Psoas muscle (tissue), 8 donors: ENCODE measurements at regions of chr12 and their contacts with region 1.

Region 1: GRCh38 chr12:54032627-54033100 is at the start of gene HOXC5:
- DNase-seq: peak; percentile 76 to 82
- ATAC-seq: peak; percentile 51 to 66 (median 59)
- H3K4me3 ChIP-seq: peak within 1 kb of the TSS; percentile 62
- H3K27ac ChIP-seq: peak within 1 kb of the TSS; percentile 24
- H3K4me1 ChIP-seq: peaks cover 13% of the 10 kb centered on the region
- H3K27me3 ChIP-seq: peaks cover 0 to 4% (median 0%) of the 10 kb centered on the region in 3 donors
- CTCF ChIP-seq: peak; percentile 92
- total RNA-seq, gene HOXC5: 0.25 to 3.3 (median 1.1) TPM

Region 2: GRCh38 chr12:54134850-54135249 is 102.2 kb after region 1 on chr12:
- intact Hi-C with region 1: loop called in 1 of 2 experiments (anchors 10 kb)
- DNase-seq: no peak
- ATAC-seq: peak in 1 of 4 donors; percentile 35
- H3K4me3 ChIP-seq: no peak overlapping the region
- H3K27ac ChIP-seq: no peak overlapping the region
- H3K4me1 ChIP-seq: no peaks in the 10 kb centered on the region
- H3K27me3 ChIP-seq: peaks cover 0 to 3% (median 0%) of the 10 kb centered on the region in 3 donors
- CTCF ChIP-seq: no peak

Region 3: GRCh38 chr12:54191550-54192022 is 158.9 kb after region 1 on chr12:
- intact Hi-C with region 1: loop called in 1 of 2 experiments (anchors 1 kb)
- DNase-seq: peak; percentile 80 to 92
- ATAC-seq: peak; percentile 75 to 81 (median 76)
- H3K4me3 ChIP-seq: peak overlapping the region; percentile 6
- H3K27ac ChIP-seq: peak overlapping the region; percentile 19
- H3K4me1 ChIP-seq: peaks cover 25% of the 10 kb centered on the region
- H3K27me3 ChIP-seq: no peaks in the 10 kb centered on the region
- CTCF ChIP-seq: peak; percentile 86

Region 4: GRCh38 chr12:54207484-54208294 is 175.0 kb after region 1 on chr12:
- intact Hi-C with region 1: loop called in 1 of 2 experiments (anchors 2 kb)
- DNase-seq: peak; percentile 79 to 91
- ATAC-seq: peak; percentile 85 to 96 (median 94)
- H3K4me3 ChIP-seq: no peak overlapping the region
- H3K27ac ChIP-seq: no peak overlapping the region
- H3K4me1 ChIP-seq: no peaks in the 10 kb centered on the region
- H3K27me3 ChIP-seq: no peaks in the 10 kb centered on the region
- CTCF ChIP-seq: peak; percentile 95